ENCODE measurements at regions of chr16 and their contacts with region 1.

Region 1: DNA sequence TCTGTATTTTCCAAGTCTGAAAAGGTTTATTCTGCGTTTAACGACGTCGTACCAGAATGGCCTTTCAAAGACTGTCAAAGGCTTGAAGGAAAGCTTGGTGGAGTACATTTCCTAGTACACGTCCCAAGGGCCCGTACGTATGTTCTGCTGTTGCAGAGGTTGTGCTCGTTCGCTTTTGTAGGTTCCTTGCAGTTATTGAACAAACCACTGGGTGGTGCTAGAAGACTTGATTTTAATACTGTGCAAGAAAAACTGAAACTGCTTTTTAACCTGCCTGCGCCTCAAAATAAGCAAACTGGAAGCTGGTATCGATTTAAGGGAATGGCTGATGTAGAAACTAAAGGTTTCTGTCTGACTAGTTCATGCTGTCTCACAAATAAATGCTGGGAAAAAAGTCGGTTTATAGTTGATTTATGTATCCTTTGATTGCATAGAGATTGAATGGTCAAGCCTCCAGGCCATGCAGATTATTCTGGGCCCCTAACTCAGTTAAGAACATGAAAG is 54.6 kb downstream of the USP10 start:
- DNase-seq: peak; percentile 91

Region 2: DNA sequence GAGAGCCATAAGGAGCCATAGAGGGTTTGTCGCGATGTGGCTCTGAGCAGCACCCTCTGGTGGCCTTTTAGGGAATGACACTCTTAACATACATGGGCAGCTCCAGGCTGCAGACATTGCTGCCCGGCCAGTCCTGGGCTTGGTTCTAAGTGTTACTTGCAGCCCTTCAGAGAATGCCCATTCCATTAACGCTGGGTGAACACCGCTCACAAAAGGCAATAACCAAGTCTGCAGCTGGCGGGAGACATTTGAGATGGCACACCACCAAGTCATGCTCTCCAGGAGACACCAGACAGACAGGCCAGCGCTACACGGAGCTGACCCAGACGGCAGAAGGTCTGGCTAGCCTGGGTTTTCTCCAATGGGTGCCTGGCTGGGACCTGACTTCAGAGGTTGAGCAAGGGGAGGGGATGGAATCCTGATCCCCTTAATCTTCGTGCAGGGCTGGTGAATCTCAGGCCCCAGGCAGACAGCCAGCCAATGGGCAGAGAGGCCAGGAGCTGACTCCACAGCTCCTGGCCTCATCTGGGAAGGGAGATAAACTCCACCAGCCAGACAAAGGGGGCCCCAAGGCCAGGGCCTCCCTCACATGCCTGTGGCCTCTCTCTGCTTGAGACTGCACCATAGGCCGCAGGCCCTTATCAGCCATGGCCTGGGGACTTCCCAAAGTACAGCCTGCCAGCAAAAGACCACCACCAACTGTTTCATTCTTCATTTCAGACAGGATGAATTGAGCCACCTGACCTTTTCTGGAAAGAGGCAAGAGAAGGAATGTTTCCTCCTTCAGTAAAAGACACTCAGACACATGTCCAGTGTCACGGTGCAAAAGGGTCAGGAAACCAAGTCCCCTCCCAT is 198.2 kb after region 1 on chr16:
- in situ Hi-C with region 1: loop called (anchors 25 kb)
- DNase-seq: peak; percentile 86